Endothelial cell of umbilical vein (primary cell): ENCODE measurements at regions of chr18 and their contacts with region 1.

Region 1: GRCh38 chr18:70296289-70296688 is 7.4 kb downstream of the SOCS6 start:
- DNase-seq: peak; percentile 50
- H3K4me3 ChIP-seq: peak overlapping the region in 1 of 3 experiments; percentile 0
- H3K27ac ChIP-seq: no peak overlapping the region
- H3K4me1 ChIP-seq: peaks cover 21% of the 10 kb centered on the region
- H3K27me3 ChIP-seq: no peaks in the 10 kb centered on the region
- CTCF ChIP-seq: no peak
- POLR2A ChIP-seq: no peak

Region 2: DNA sequence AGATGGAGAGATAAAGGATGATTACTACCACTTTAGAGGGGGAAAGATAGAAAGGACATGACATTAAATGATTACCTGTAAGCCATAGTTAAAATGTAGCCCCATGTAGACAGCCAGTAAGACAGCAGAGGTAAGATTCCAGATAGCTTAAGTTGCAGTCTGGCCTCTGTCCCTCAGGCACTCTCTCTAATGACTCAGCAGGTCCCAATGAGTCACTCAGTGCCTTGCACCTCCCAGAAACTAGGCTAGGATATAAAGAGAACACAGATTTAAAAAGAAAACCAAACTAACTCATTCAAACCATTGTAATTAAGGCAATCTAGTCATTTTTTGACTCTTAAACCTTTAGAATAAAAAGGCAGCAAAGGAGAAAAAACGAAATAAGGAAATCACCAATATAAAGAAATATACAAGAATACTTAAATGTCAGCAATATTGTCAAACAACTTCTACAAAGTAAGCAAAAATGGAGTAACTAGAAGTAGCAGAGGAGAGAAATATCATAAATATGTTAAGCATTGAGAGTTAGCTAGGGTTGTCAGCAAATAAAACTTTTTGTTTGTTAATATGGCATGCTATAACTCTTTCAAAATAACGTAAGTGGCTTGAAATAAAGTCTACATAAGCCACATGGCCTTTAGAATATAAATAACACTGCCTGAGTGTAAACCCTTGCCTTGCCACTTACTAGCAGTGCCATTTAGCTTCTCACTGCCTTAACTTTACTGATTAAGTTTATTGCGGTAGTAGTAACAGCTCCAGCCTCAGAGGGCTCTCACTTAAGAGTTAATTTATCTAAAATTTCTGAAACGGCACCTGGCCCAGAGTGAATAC is 41.1 kb after region 1 on chr18:
- CTCF ChIA-PET with region 1: no interaction called
- POLR2A ChIA-PET with region 1: no interaction called
- dilution Hi-C with region 1: no loop called
- intact Hi-C with region 1: loop called (anchors 5 kb)
- DNase-seq: peak; percentile 69
- H3K4me3 ChIP-seq: no peak overlapping the region
- H3K27ac ChIP-seq: no peak overlapping the region
- H3K4me1 ChIP-seq: peaks cover 9% of the 10 kb centered on the region
- H3K27me3 ChIP-seq: no peaks in the 10 kb centered on the region
- CTCF ChIP-seq: no peak
- POLR2A ChIP-seq: no peak